IMR-90 (cell line): ENCODE measurements at regions of chr5 and their contacts with region 1.

Region 1: GRCh38 chr5:126471875-126472537 is 48.8 kb downstream of the GRAMD2B start:
- DNase-seq: peak; percentile 88
- ATAC-seq: peak; percentile 93
- H3K4me3 ChIP-seq: no peak overlapping the region
- H3K27ac ChIP-seq: peak overlapping the region; percentile 96
- H3K4me1 ChIP-seq: peaks cover 14% of the 10 kb centered on the region
- H3K27me3 ChIP-seq: no peaks in the 10 kb centered on the region
- CTCF ChIP-seq: no peak
- POLR2A ChIP-seq: no peak
- RAD21 ChIP-seq: 0 out of 2 replicates have a peak, but pooled peaks have one; percentile 3

Region 2: GRCh38 chr5:126234563-126235195 is 237.3 kb before region 1 on chr5:
- CTCF ChIA-PET with region 1: no interaction called
- POLR2A ChIA-PET with region 1: no interaction called
- dilution Hi-C with region 1: no loop called
- in situ Hi-C with region 1: no loop called
- intact Hi-C with region 1: no loop called
- DNase-seq: peak; percentile 6
- ATAC-seq: peak; percentile 66; the same call in 1 of the 2 replicates
- H3K4me3 ChIP-seq: no peak overlapping the region
- H3K27ac ChIP-seq: no peak overlapping the region
- H3K4me1 ChIP-seq: no peaks in the 10 kb centered on the region
- H3K27me3 ChIP-seq: no peaks in the 10 kb centered on the region; the same call in 1 of the 2 replicates
- CTCF ChIP-seq: peak; percentile 44
- POLR2A ChIP-seq: no peak
- RAD21 ChIP-seq: peak; percentile 35; the same call in 1 of the 2 replicates

Region 3: DNA sequence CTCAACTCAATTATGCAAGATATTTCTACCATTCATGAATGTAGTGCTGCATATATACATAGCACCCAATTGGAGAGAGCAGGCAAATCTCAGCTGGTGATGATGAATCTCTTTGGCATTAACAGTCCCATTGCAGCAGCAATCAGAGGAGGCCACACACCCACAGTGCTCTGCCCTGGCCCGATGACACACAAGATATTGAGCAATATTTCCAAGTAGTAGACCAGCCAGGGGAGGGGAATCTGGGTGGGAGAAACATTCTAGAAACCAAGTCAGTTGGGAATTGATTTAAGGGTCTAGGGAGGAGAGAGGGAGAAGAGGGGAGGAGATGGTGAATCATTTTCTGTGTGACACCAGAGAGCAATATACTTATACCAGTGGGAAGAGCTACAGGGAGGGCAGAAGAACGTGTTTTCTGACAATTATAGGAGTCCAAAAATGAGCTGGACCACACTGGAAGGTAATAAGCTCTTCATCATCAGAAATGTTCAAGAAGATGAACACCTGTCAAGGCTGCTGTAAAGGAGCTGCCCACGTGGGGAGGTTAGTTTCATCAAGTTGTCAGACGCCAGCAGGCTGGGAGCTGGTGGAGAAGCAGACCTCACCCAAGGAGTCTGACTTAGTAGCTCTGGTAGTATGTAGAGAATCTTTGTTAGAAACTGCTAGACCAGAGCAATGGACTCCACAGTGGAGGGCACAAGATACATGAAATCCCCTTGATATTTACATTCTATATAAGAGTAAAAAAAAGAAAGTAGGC is 616.4 kb after region 1 on chr5:
- CTCF ChIA-PET with region 1: no interaction called
- POLR2A ChIA-PET with region 1: no interaction called
- dilution Hi-C with region 1: no loop called
- in situ Hi-C with region 1: no loop called
- intact Hi-C with region 1: loop called (anchors 2 kb)
- DNase-seq: peak; percentile 97
- ATAC-seq: peak; percentile 94
- H3K4me3 ChIP-seq: no peak overlapping the region
- H3K27ac ChIP-seq: peak overlapping the region; percentile 36
- H3K4me1 ChIP-seq: peaks cover 5% of the 10 kb centered on the region; the same call in 1 of the 2 replicates
- H3K27me3 ChIP-seq: no peaks in the 10 kb centered on the region
- CTCF ChIP-seq: no peak
- POLR2A ChIP-seq: no peak
- RAD21 ChIP-seq: no peak